ENCODE measurements at regions of chr2 and their contacts with region 1.

Region 1: DNA sequence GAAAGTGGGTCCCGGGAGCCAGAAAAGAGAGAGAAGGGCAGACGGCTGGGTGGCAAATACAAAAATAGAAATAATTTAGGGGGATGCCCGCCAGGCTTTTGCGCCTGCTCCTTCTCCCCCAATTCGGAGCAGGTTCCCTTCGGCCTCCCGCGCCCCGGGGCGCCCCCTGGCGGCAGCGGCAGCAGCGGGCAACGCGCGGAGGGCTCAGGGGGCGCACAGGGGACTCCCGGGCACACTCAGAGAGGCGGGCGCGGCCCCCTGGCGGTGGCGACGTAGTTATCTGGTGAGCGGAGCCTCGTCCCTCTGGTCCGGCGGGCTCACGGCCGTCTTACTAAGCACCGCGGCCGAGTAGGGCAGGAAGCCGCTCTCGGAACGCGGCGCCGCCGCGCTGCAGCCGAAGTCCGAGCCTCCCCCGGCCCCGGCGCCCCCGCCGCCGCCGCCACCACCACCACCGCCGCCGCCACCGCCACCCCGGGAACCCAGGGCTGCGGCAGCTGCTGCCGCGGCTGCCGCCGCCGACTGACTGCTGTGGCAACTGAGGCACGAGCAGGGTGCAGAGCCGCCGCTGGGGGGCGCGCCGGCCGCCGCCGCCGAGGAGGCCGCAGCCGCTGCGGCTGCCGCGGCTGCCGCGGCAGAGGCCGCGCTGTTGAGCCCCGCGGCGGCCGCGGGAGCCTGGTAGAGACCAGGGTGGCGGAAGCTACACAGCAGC is 3.8 kb downstream of the EVX2 start:
- DNase-seq: peak; percentile 72 to 80 (median 78)
- H3K4me3 ChIP-seq: peak overlapping the region in 2 of 7 experiments; percentile 4 to 40
- H3K27ac ChIP-seq: no peak overlapping the region
- H3K4me1 ChIP-seq: peaks cover 0 to 15% (median 9%) of the 10 kb centered on the region in 4 experiments
- H3K27me3 ChIP-seq: peaks cover 47 to 96% (median 74%) of the 10 kb centered on the region in 5 experiments

Region 2: DNA sequence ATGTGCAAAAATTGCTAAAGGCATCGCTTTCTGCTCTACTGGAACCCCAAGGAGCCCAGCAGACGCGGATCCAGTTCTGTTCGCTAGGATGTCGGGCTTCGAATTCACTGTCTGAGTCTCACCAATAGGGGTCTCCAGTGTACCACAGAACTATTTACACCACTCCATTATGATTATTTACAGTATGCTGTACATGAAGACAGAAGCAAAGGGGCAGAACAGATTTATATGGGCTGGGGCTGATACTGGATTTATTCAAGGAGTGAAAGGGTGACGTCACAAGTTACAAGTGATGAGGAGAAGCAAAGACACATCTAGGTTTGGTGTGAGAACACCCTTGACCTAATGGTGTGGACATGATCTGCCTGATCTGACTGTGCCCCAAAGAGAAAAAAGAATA is 713.2 kb before region 1 on chr2:
- CTCF ChIA-PET with region 1: interaction called, 17 read pairs
- POLR2A ChIA-PET with region 1: no interaction called
- DNase-seq: peak; percentile 65 to 84 (median 81)
- H3K4me3 ChIP-seq: no peak overlapping the region
- H3K27ac ChIP-seq: no peak overlapping the region
- H3K4me1 ChIP-seq: peaks cover 2 to 11% (median 7%) of the 10 kb centered on the region in 4 experiments
- H3K27me3 ChIP-seq: peaks cover 3 to 52% (median 25%) of the 10 kb centered on the region in 5 experiments

Region 3: DNA sequence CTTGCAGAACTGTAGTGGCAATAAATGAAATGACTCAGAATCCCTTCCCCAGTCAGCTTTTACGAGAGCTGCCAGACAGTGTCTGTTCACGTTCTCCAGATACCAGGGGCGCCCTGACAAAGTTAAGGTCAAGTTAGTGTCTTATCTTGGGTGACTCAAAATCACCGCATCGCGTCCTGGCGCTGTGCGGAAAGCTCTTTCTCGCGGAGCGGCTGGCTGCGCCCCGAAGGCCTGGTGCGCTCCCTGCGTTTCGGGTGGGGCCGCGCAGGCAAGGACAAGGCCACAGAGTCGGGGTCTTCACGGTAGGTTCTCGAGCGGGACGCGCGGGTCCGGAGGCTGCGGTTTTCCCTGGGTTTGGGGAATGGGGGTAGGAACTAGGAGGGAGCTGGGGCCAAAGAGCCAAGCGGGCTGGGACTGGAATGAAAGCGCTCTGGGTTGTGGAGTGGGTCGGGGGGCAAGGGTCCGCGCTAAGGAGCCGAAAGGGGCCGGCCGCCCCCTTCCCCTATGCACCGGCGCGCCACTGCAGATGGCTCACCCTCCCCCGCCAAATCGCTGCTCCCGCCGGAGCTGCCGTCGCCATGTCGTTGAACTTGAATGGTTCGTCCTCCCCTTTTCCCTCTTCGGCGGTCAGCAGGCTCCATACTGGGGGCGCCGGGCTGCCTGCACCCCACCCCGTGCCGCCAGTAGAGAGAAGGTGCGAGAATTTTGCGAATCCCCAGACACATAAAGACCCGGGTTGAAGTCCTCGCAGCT is 24.5 kb after region 1 on chr2:
- CTCF ChIA-PET with region 1: interaction called, 16 read pairs
- POLR2A ChIA-PET with region 1: no interaction called
- DNase-seq: no peak
- H3K4me3 ChIP-seq: no peak overlapping the region
- H3K27ac ChIP-seq: no peak overlapping the region
- H3K4me1 ChIP-seq: peaks cover 0 to 11% (median 8%) of the 10 kb centered on the region in 4 experiments
- H3K27me3 ChIP-seq: peaks cover 27 to 99% (median 62%) of the 10 kb centered on the region in 5 experiments

Region 4: DNA sequence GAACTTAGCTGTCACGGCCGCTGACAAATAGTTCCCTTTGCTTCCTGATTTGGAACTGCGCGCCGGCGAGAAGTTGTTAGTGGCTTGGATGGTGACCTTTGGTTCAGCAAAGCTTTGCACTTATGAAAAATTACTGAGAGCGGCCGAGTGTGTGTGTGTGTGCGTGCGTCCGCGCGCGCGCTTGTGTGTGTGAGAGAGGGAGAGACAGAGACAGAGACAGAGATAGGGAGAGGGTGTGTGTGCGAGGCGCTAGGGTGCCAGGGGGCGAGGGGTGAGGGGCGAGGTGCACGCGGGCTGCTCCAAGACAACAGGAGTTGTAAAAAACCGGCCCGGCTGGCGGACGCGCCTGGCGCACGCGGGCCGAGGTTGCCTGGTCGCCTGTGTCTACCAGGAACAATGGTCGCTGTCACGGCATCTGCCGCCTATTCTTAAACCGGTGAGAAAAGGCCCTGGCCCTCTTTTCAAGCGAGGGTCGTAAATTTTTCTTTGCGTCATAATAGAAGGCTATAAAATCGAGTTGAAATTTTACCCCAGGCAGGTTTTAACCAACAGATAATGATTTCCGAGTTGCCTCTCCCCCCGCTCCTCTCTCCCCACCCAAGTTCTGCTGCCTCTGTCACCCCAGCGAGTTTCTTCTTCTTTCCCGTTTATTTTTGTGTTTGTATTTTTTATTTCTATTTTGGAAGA is 77.7 kb after region 1 on chr2:
- CTCF ChIA-PET with region 1: no interaction called
- POLR2A ChIA-PET with region 1: no interaction called
- DNase-seq: peak in 1 of 3 donors; percentile 41
- H3K4me3 ChIP-seq: no peak overlapping the region
- H3K27ac ChIP-seq: no peak overlapping the region
- H3K4me1 ChIP-seq: peaks cover 0 to 7% (median 3%) of the 10 kb centered on the region in 4 experiments
- H3K27me3 ChIP-seq: peaks cover 14 to 100% (median 67%) of the 10 kb centered on the region in 5 experiments